ENCODE measurements at regions of chr15 and their contacts with region 1.

Region 1: DNA sequence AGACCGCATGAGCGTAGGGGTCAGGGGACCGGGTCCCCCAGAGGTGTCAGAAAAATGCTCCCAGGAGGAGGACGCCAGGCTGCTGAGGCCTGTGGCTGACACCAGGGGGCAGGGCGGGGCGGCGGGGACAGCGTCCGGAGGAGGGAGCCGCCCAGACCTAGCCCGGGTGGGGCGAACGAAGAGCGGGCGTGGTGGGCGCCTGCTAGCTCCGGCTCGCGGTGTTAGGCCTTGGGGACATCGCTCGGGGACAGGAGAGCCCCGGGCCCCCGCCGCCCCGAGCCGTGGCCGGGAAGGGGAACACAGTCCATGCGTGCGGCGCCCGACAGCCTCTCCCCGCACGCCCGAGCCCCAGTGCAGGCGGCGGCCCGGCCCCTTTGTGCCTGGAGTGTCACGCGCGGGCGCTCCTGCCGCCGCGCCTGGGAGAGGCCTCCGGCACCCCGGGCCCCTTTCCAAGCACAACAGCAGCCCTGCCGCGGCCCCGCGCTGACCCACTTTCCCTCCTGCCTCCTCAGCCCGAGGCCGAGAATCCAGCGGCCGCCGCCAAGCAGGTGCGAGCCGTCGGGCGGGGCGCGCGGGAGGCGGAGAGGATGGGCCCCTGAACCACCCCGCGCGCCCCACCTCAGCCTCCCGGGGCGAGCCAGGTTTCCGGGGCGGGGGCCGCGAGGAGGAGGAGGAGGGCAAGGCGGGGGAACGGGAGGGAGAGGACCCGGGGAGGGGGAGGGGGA is 111.0 kb upstream of the KLF13 start:
- DNase-seq: peak; percentile 87
- ATAC-seq: peak; percentile 76
- H3K4me3 Mint-ChIP-seq: peak overlapping the region; percentile 58
- H3K27ac Mint-ChIP-seq: no peak overlapping the region
- H3K4me1 Mint-ChIP-seq: peaks cover 12% of the 10 kb centered on the region
- H3K27me3 Mint-ChIP-seq: peaks cover 6% of the 10 kb centered on the region
- CTCF ChIP-seq: peak; percentile 69

Region 2: DNA sequence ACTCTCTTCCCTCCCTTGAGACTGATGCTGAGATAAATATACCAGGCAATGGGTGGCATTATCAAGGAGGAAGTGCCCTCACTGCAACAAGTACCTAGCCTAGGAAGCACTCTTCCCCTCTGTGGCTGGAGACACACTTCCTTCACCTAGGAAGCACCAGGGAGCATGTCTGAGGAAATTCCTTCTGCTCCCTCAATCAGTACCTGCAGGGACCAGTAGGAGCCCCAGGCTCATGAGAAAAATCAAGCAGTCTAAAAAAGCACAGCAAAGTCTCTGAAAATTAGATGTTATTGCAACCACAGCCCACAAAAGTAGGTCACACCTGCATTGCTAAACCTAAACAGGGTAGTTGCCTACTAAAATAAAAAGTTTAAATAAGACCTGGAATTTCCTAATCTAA is 36.0 kb before region 1 on chr15:
- CTCF ChIA-PET with region 1: no interaction called
- POLR2A ChIA-PET with region 1: no interaction called
- DNase-seq: no peak
- ATAC-seq: peak; percentile 91
- H3K4me3 Mint-ChIP-seq: no peak overlapping the region
- H3K27ac Mint-ChIP-seq: no peak overlapping the region
- H3K4me1 Mint-ChIP-seq: peaks cover 16% of the 10 kb centered on the region
- H3K27me3 Mint-ChIP-seq: no peaks in the 10 kb centered on the region
- CTCF ChIP-seq: no peak

Region 3: DNA sequence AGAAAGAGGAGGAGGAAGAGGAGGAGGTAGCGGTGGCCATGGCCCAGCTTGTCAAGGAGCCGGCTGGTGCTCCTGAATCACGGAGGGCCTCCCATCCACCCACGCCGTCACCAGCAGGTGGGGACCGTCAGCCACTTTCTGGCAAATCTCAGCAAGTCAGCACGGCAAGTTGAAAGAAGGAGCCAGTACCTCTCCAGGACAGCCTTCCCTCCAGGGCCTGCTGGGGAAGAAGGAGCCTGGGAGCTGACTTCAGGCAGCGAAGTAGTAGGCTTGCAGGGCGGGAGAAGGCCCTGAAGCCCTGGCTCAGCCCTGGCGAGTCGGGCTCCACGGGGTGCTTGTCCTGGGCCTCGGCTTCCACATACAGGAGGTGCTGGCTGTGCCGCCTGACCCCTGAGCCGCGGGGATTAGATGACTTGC is 14.9 kb before region 1 on chr15:
- CTCF ChIA-PET with region 1: interaction called, 10 read pairs
- POLR2A ChIA-PET with region 1: no interaction called
- DNase-seq: peak; percentile 76
- ATAC-seq: peak; percentile 80
- H3K4me3 Mint-ChIP-seq: no peak overlapping the region
- H3K27ac Mint-ChIP-seq: no peak overlapping the region
- H3K4me1 Mint-ChIP-seq: peaks cover 14% of the 10 kb centered on the region
- H3K27me3 Mint-ChIP-seq: no peaks in the 10 kb centered on the region
- CTCF ChIP-seq: no peak

Region 4: GRCh38 chr15:31302778-31303725 is 87.4 kb after region 1 on chr15:
- CTCF ChIA-PET with region 1: interaction called, 11 read pairs
- POLR2A ChIA-PET with region 1: no interaction called
- DNase-seq: peak; percentile 48
- ATAC-seq: peak; percentile 23
- H3K4me3 Mint-ChIP-seq: no peak overlapping the region
- H3K27ac Mint-ChIP-seq: no peak overlapping the region
- H3K4me1 Mint-ChIP-seq: peaks cover 51% of the 10 kb centered on the region
- H3K27me3 Mint-ChIP-seq: peaks cover 5% of the 10 kb centered on the region
- CTCF ChIP-seq: no peak